PC-9 (cell line): ENCODE measurements at regions of chr6 and their contacts with region 1.

Region 1: DNA sequence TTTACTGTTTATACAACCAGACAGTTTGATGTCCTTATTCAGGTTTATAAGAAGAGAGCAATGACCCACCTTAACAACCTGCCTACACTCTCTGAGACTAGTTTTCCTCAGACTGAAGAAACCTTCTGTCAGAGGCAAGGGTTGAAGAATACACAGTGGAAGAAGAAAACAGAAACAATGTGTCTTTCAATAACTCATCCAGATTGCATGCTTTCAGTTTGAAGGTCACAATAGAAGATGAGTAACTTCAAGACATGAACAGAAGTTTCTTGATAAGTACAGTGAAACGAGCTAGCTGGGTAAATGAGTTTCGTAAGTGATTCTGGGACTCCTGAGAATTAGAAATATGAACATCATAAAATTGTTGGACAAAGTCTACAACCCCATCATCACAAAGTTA is 141.7 kb downstream of the STXBP5 start:
- DNase-seq: no peak
- H3K4me3 ChIP-seq: no peak overlapping the region
- H3K27ac ChIP-seq: no peak overlapping the region
- H3K4me1 ChIP-seq: no peaks in the 10 kb centered on the region
- H3K27me3 ChIP-seq: no peaks in the 10 kb centered on the region
- CTCF ChIP-seq: no peak

Region 2: GRCh38 chr6:147126618-147127022 is 219.3 kb before region 1 on chr6:
- CTCF ChIA-PET with region 1: no interaction called
- POLR2A ChIA-PET with region 1: interaction called, 11 read pairs
- intact Hi-C with region 1: no loop called
- DNase-seq: no peak
- H3K4me3 ChIP-seq: no peak overlapping the region
- H3K27ac ChIP-seq: no peak overlapping the region
- H3K4me1 ChIP-seq: 0 out of 2 replicates have a peak, but pooled peaks cover 3% of the 10 kb centered on the region
- H3K27me3 ChIP-seq: no peaks in the 10 kb centered on the region
- CTCF ChIP-seq: no peak